Uterus (tissue), 4 donors: ENCODE measurements at regions of chr2 and their contacts with region 1.

Region 1: DNA sequence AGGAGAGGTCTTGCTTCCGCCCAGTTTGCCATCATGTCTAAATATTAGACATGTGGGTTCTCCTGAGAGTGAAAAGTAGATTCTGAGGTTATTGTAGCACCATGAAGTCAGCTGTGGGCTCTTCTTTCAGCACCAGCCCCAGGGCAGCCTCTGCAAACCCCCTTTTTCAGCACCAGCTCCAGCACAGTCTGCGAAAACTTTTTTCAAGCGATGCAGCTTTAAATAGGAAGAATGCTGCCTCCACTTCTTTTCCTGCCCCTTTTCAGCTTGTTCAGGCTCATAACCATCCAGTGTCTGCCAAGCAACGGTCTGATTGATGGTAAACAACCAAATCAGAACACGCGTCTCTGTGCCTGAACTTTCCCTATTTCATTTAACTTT is at the start of gene COL5A2:
- DNase-seq: peak; percentile 57 to 70
- H3K4me3 ChIP-seq: peak within 1 kb of the TSS; percentile 49 to 71
- H3K27ac ChIP-seq: peak within 1 kb of the TSS; percentile 84 to 93
- H3K4me1 ChIP-seq: no peaks in the 10 kb centered on the region
- H3K27me3 ChIP-seq: no peaks in the 10 kb centered on the region
- CTCF ChIP-seq: no peak
- POLR2A ChIP-seq: peak in 1 of 2 donors; percentile 25
- total RNA-seq, gene COL5A2: 15.0 to 908 (median 33.3) TPM

Region 2: DNA sequence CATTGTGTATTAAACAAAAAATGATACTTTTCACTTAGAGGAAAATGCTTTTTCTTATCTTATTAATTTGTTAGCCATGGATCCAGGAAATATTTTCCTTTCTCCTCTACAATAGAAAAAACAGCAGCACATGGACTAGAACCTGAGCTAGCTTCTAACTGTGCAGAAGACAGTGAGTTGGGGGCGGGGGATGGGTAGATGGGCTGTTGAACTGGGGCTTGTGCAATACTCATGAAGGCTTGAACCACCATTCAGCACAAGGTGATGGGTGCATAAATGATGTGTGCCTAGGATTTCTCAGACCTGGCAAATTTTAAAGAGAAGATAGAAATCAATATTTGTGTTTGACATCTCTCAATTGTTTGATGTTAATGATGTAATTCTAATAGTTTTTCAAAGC is 42.0 kb before region 1 on chr2:
- intact Hi-C with region 1: loop called (anchors 5 kb)
- DNase-seq: no peak
- H3K4me3 ChIP-seq: no peak overlapping the region
- H3K27ac ChIP-seq: no peak overlapping the region
- H3K4me1 ChIP-seq: no peaks in the 10 kb centered on the region
- H3K27me3 ChIP-seq: no peaks in the 10 kb centered on the region
- CTCF ChIP-seq: no peak
- POLR2A ChIP-seq: no peak